ENCODE measurements at regions of chr12 and their contacts with region 1.

Region 1: DNA sequence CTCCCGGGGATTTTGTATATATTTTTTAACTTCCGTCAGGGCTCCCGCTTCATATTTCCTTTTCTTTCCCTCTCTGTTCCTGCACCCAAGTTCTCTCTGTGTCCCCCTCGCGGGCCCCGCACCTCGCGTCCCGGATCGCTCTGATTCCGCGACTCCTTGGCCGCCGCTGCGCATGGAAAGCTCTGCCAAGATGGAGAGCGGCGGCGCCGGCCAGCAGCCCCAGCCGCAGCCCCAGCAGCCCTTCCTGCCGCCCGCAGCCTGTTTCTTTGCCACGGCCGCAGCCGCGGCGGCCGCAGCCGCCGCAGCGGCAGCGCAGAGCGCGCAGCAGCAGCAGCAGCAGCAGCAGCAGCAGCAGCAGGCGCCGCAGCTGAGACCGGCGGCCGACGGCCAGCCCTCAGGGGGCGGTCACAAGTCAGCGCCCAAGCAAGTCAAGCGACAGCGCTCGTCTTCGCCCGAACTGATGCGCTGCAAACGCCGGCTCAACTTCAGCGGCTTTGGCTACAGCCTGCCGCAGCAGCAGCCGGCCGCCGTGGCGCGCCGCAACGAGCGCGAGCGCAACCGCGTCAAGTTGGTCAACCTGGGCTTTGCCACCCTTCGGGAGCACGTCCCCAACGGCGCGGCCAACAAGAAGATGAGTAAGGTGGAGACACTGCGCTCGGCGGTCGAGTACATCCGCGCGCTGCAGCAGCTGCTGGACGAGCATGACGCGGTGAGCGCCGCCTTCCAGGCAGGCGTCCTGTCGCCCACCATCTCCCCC is 777 bp downstream of the ASCL1 start:
- DNase-seq: peak; percentile 39 to 50
- H3K4me3 ChIP-seq: no peak overlapping the region
- H3K27ac ChIP-seq: no peak overlapping the region
- H3K4me1 ChIP-seq: peaks cover 13 to 26% of the 10 kb centered on the region in 2 donors
- H3K27me3 ChIP-seq: peaks cover 28% of the 10 kb centered on the region
- CTCF ChIP-seq: no peak
- POLR2A ChIP-seq: no peak

Region 2: GRCh38 chr12:102675672-102676071 is 282.6 kb before region 1 on chr12:
- intact Hi-C with region 1: no loop called
- DNase-seq: no peak
- H3K4me3 ChIP-seq: no peak overlapping the region
- H3K27ac ChIP-seq: no peak overlapping the region
- H3K4me1 ChIP-seq: no peaks in the 10 kb centered on the region
- H3K27me3 ChIP-seq: no peaks in the 10 kb centered on the region
- CTCF ChIP-seq: no peak
- POLR2A ChIP-seq: no peak

Region 3: DNA sequence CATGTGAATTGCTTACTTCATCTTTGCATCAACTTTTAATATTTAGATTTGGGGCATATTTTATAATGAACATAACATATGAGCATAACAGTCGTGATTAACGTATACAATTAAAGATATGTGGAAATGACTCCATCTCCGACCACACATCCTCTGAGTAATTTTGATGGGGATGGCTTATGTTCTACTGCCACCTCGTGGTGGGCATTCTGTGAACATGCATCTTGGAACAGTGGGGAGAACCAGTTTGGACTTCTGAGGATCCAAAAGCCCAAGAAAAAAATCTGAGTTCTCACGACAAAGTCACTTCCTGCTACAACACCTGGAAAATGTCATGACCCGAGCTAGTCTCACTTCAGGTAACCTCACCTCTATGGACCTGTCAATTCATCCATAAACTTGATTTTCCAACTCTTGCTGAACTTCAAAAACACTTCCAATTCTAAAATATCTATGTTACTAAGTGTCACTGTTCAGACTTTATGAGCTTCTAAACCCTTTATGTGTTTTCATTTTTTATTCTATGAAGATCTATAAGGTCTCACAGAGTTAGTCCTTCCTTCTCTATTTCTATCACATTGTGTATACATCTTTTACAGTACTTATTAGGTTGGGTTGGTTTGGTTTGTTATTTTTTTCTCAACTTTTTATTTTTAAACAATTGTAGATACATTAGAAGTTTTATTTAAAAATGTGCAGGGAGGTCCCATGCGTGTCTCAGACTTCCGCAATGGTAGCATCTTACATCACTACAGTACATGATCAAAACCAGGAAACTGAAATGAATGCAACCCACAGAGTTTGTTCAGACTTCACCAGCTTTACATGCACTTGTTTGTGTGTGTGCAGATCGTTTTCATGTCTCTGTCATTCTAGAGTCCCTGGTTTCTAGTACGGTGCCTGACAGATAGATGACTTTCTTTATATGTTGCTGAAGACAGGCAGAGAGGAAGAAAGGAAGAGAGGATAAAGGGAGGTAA is 590.7 kb after region 1 on chr12:
- intact Hi-C with region 1: loop called (anchors 10 kb)
- DNase-seq: peak; percentile 57 to 67
- H3K4me3 ChIP-seq: no peak overlapping the region
- H3K27ac ChIP-seq: no peak overlapping the region
- H3K4me1 ChIP-seq: no peaks in the 10 kb centered on the region
- H3K27me3 ChIP-seq: no peaks in the 10 kb centered on the region
- CTCF ChIP-seq: peak; percentile 24 to 80 (median 72)
- POLR2A ChIP-seq: no peak

Measured in thyroid gland (tissue), 4 donors.